Esophagus muscularis mucosa (tissue), 4 donors: ENCODE measurements at regions of chr4 and their contacts with region 1.

Region 1: GRCh38 chr4:128386761-128387599 is 99.4 kb upstream of the PGRMC2 start:
- DNase-seq: peak; percentile 98
- H3K4me3 ChIP-seq: peak overlapping the region in 3 of 4 donors; percentile 13 to 42 (median 29)
- H3K27ac ChIP-seq: peak overlapping the region; percentile 77 to 86 (median 82)
- H3K4me1 ChIP-seq: peaks cover 38 to 83% (median 80%) of the 10 kb centered on the region in 4 donors
- H3K27me3 ChIP-seq: no peaks in the 10 kb centered on the region
- CTCF ChIP-seq: peak in 1 of 3 experiments; percentile 8
- EP300 ChIP-seq: no peak
- POLR2A ChIP-seq: no peak

Region 2: DNA sequence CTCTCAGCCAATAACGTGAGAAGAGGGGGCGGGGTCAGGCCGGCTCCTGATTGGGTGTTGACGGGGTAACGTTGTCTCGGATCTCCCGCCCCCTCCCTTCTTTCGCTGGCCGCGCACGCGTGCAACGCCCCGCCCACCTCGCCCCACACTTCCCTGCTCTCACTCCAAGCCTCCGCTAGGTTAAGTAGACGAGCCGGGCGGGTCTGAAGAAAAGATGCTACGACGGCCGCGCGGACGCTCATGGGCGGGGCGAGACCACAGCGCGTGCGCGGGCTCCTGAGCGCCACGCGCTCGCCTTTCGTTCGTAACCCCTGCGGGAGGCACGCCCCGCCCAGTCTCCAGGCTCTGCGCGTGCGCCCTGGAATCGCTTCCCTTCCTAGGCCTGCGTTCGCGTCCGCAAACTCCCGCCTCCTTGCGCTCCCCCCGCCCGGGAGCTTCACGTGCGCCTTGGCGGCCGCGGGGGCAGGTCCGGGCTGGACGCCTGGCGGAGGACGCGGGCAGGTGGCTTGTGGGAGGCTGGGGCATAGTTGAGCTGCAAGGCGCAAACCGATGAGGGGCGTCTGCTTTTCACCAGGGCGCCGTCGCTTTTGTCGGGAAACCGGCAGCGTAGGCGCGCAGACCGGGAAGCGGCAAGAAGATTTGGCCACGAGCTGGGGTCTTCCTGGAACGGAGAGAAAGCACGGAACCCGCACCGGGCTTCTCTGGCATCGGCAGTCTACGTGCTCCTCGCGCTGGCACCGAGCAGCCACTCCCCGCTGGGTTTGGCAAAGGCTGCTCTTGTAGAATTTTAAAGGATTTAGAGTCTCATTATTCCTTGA is 98.9 kb before region 1 on chr4:
- intact Hi-C with region 1: loop called (anchors 5 kb)
- DNase-seq: peak; percentile 100
- H3K4me3 ChIP-seq: peak overlapping the region; percentile 81 to 96 (median 87)
- H3K27ac ChIP-seq: peak overlapping the region; percentile 94 to 97 (median 95)
- H3K4me1 ChIP-seq: peaks cover 26 to 38% (median 33%) of the 10 kb centered on the region in 4 donors
- H3K27me3 ChIP-seq: no peaks in the 10 kb centered on the region
- CTCF ChIP-seq: peak in 2 of 3 experiments; percentile 35 to 41
- EP300 ChIP-seq: peak; percentile 70
- POLR2A ChIP-seq: peak; percentile 63

Region 3: GRCh38 chr4:128663336-128663735 is 276.4 kb after region 1 on chr4:
- intact Hi-C with region 1: loop called (anchors 5 kb)
- DNase-seq: no peak
- H3K4me3 ChIP-seq: no peak overlapping the region
- H3K27ac ChIP-seq: no peak overlapping the region
- H3K4me1 ChIP-seq: peaks cover 25 to 43% (median 39%) of the 10 kb centered on the region in 4 donors
- H3K27me3 ChIP-seq: no peaks in the 10 kb centered on the region
- CTCF ChIP-seq: no peak
- EP300 ChIP-seq: no peak
- POLR2A ChIP-seq: no peak